ENCODE measurements at regions of chr12 and their contacts with region 1.

Region 1: DNA sequence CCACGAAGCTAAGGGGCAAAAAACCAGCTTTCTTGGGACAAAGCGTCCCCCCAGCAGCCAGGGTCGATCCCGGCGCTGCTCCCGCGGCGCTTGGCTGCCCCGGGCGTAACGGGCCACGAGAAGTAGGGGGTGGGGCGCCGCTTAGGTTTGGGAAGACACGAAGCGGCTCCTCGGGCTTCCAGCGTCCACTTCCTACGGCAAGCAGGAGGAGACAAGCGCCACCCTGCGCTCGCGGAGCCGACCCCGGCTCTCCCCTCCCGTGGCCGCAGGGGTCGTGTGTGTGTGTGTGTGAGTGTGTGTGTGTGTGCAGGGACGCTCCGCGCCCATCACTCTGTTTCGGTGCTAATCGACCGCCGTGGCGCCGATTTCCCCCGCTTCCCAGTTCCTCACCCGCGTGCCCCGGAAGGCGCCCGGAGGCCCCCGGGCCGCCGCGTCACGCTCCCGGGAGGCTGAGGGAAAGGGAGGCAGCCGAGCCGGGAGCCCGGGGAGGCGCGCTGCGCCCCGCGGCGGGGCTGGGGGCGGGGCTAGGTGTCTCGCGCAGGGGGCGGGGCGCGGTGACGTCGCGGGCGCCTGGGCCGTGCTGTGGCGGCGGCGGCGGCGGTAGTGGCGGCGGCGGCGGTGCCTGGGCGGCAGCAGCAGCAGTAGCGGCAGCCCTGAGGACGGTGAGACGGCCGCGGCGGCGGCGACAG is at the start of gene ERC1:
- DNase-seq: peak; percentile 96
- total RNA-seq, gene ERC1: 84.0 to 92.2 TPM

Region 2: GRCh38 chr12:1083889-1084262 is 93.1 kb after region 1 on chr12:
- intact Hi-C with region 1: loop called in 1 of 2 experiments (anchors 5 kb)
- DNase-seq: no peak

Measured in posterior vena cava (tissue), 2 donors.